A549 (cell line): ENCODE measurements at regions of chr3 and their contacts with region 1.

Region 1: DNA sequence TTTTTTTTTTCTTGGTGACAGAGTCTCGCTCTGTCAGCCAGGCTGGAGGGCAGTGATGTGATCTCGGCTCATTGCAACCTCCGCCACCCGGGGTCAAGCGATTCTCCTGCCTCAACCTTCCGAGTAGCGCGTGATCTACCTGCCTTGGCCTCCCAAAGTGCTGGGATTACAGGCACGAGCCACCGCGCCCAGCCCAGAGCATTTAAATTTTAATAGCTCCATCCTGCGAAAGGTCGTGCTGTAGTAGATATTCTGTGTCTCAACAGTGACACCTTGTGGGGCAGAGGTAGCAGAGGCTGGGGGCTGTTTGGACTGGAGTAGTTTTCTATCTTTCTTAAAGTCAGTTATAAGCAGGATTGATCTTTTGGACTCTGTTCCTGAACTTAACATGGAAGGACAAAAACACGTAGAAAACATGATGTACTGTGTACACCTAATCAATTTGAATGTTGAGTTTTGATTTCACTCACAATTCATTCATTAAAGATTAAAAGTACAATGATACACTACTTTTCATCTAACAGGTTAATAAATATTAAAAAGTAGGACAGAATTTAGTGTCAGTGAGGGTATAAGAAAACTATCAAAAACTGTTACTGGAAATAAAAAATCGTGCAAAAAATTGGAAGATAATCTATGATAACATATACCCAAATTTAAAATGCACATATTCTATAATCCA is 11.0 kb upstream of the PDCD6IP start:
- DNase-seq: peak; percentile 72 to 74
- ATAC-seq: peak; percentile 76 to 91
- H3K4me3 ChIP-seq: peak overlapping the region; percentile 35
- H3K27ac ChIP-seq: peak overlapping the region in 1 of 2 experiments; percentile 64; a peak in 3 of 6 replicates
- H3K4me1 ChIP-seq: peaks cover 40% of the 10 kb centered on the region
- CTCF ChIP-seq: peak; percentile 92
- EP300 ChIP-seq: no peak
- POLR2A ChIP-seq: no peak
- RAD21 ChIP-seq: peak; percentile 88 to 89

Region 2: GRCh38 chr3:33629219-33629618 is 158.2 kb before region 1 on chr3:
- CTCF ChIA-PET with region 1: interaction called, 30 read pairs
- POLR2A ChIA-PET with region 1: no interaction called
- DNase-seq: no peak
- ATAC-seq: no peak
- H3K4me3 ChIP-seq: no peak overlapping the region
- H3K27ac ChIP-seq: no peak overlapping the region
- H3K4me1 ChIP-seq: no peaks in the 10 kb centered on the region
- CTCF ChIP-seq: no peak
- EP300 ChIP-seq: no peak
- POLR2A ChIP-seq: no peak
- RAD21 ChIP-seq: no peak

Region 3: DNA sequence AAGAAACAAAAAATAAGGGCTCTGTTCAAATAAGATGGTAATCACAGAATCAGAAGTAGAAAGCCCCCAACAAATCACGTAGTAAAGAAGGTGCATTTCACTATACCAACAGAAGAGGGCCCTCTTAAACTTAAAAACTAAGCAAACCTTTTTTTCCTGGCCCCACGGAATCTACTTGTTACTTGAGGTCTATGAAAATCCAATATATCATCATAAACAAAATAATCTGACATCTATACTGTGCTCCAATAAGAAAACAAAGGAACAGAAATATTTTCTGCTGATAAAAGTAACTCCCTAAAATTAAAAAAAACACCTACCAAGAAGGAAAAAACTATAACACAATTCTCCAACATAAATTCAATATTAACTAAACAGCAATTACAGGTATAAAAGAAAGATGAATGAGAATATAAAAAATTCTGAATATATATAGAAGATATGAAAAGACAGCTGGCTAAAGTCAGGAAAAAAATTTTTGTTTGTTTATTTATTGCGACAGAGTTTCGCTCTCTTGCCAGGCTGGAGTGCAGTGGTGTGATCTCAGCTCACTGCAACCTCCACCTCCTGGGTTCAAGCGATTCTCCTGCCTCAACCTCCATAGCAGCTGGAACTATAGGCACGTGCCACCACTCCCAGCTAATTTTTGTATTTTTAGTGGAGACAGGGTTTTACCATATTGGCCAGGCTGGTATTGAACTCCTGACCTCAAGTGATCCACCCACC is 151.2 kb before region 1 on chr3:
- CTCF ChIA-PET with region 1: interaction called, 30 read pairs
- POLR2A ChIA-PET with region 1: no interaction called
- DNase-seq: peak; percentile 19 to 73
- ATAC-seq: peak; percentile 47 to 70; a peak in 3 of 6 replicates
- H3K4me3 ChIP-seq: no peak overlapping the region
- H3K27ac ChIP-seq: no peak overlapping the region
- H3K4me1 ChIP-seq: peaks cover 17% of the 10 kb centered on the region
- CTCF ChIP-seq: peak; percentile 80
- EP300 ChIP-seq: no peak
- POLR2A ChIP-seq: no peak
- RAD21 ChIP-seq: peak; percentile 78 to 80

Region 4: DNA sequence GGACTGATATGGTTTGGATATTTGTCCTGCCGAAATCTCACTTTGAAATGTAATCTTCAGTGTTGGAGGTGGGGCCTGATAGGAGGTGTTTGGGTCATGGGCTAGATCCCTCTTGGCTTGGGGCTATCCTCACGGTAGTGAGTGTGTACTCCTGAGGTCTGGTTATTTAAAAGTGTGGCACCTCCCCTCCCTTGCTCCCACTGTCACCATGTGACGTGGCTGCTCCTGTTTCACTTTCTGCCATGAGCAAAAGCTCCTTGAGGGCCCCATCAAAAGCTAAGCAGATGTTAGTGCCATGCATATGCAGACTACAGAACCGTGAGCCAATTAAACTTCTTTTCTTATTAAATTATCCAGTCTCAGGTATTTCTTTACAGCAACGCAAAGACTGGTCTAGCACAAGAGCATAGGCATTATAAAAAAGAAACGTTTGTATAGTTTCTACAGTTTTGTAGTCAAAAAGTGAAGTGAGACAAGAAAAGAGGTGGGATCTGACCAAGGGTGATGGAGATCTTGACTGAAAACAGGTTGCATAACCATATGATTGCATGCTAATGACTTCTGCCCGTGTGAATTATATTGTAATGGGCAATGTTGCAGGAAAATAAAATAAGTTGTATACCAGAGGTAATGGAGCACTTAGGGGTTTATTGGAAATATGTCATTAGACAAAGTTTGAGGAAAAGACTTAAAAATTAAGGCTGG is 40.9 kb before region 1 on chr3:
- CTCF ChIA-PET with region 1: interaction called, 10 read pairs
- POLR2A ChIA-PET with region 1: no interaction called
- DNase-seq: no peak
- ATAC-seq: no peak
- H3K4me3 ChIP-seq: no peak overlapping the region
- H3K27ac ChIP-seq: no peak overlapping the region
- H3K4me1 ChIP-seq: no peaks in the 10 kb centered on the region
- CTCF ChIP-seq: no peak
- EP300 ChIP-seq: no peak
- POLR2A ChIP-seq: no peak
- RAD21 ChIP-seq: no peak

Region 5: GRCh38 chr3:33758864-33759263 is 28.6 kb before region 1 on chr3:
- CTCF ChIA-PET with region 1: no interaction called
- POLR2A ChIA-PET with region 1: no interaction called
- DNase-seq: no peak
- ATAC-seq: no peak
- H3K4me3 ChIP-seq: no peak overlapping the region
- H3K27ac ChIP-seq: no peak overlapping the region
- H3K4me1 ChIP-seq: no peaks in the 10 kb centered on the region
- CTCF ChIP-seq: no peak
- EP300 ChIP-seq: no peak
- POLR2A ChIP-seq: no peak
- RAD21 ChIP-seq: no peak

Region 6: DNA sequence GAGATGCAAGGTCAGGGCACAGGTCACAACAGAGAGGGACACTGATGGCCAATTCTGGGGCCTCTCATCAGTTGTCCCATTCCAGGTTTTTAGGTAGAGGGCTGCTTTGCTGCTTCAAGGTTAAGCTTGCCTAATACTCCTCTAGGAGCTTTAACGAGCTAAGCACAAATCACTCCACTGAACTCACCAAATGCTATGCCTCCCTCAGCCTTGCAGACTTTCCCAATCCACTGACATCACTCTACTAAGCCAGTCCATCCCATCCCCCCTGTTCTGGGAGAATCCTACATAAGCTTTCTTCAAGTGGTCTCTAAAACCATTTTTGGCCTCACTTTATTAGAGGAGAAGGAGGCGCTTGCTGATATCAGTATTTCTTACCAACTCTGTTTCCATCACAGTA is 13.8 kb before region 1 on chr3:
- CTCF ChIA-PET with region 1: interaction called, 85 read pairs
- POLR2A ChIA-PET with region 1: no interaction called
- DNase-seq: no peak
- ATAC-seq: 0 out of 6 replicates have a peak, but pooled peaks of 1 of the 2 experiments have one; percentile 43
- H3K4me3 ChIP-seq: no peak overlapping the region
- H3K27ac ChIP-seq: no peak overlapping the region
- H3K4me1 ChIP-seq: no peaks in the 10 kb centered on the region
- CTCF ChIP-seq: no peak
- EP300 ChIP-seq: no peak
- POLR2A ChIP-seq: no peak
- RAD21 ChIP-seq: no peak

Region 7: GRCh38 chr3:33798411-33799201 is 11.1 kb after region 1 on chr3 and contains the start of gene PDCD6IP:
- CTCF ChIA-PET with region 1: interaction called, 20 read pairs
- POLR2A ChIA-PET with region 1: interaction called, 15 read pairs
- DNase-seq: peak; percentile 95
- ATAC-seq: peak; percentile 96 to 98
- H3K4me3 ChIP-seq: peak within 1 kb of the TSS; percentile 88
- H3K27ac ChIP-seq: peak within 1 kb of the TSS; percentile 97
- H3K4me1 ChIP-seq: peaks cover 25% of the 10 kb centered on the region; the same call in 2 of the 3 replicates
- CTCF ChIP-seq: no peak
- EP300 ChIP-seq: no peak
- POLR2A ChIP-seq: peak; percentile 87
- RAD21 ChIP-seq: no peak
- polyA plus RNA-seq, gene PDCD6IP: 180 and 221 TPM in 2 replicates